Right ventricle myocardium inferior (tissue), 1 donor: ENCODE measurements at regions of chr14 and their contacts with region 1.

Region 1: GRCh38 chr14:105324080-105324778 is 9.7 kb downstream of the PACS2 start:
- DNase-seq: no peak
- ATAC-seq: peak; percentile 81

Region 2: DNA sequence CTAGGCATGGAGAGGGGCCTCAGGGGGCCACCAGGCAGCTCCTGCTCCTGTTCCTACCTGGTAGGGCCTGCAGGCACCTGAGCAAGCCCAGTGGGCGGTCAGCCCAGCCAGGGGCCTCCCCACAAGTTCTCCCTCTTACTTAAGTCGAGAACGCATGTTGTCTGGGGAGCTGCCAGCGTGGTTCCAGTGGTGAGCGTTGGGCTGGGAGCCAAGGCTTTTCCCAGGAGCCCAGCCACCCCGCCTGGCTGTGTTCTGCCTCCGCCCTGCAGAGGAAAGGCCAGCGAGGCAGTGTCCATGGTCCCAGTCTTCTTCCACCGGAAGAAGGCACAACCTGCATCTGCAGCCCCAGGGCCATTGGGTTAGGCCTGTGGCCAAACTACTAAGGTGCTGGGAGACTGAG is 743.3 kb before region 1 on chr14:
- intact Hi-C with region 1: no loop called
- DNase-seq: peak; percentile 84
- ATAC-seq: peak; percentile 30

Region 3: GRCh38 chr14:105005929-105006830 is 318.0 kb before region 1 on chr14:
- intact Hi-C with region 1: no loop called
- DNase-seq: peak; percentile 53
- ATAC-seq: no peak

Region 4: DNA sequence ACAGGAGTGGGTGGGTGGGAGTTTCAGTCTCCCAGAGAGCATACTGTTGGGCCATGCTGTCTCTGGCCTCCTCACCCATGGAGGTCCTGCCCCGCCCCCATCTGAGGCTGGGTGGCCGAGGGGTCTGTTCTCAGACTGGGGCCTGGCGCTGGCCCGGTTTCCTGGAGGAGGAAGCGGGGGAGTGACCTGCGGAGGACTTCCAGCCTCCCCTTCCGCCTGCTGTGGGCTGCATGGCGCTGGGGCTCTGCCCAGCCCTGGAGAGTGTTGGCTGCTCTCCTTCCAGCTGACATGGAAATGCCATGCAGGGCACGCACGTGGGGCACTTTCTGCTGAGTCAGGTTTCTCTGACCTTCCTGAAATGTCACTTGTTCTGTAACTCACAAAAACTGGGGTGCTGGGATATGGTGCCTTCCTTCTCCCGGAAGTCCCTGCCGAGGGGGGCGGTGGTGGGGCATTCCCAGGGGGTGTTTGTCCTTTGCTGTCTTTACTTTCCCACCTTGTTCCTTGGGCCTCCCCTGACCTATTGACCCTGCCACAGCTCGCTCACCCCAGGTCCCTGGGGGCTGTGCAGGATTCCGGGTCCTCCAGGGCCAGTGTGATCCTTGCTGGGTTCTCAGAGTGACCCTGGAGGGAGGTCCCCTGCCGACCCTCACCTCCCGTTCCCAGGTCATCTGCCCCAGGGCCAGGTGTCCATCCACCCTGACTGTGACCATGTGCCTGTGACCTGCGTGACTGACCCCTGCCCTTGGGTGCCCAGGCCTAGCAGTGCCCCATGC is 13.9 kb after region 1 on chr14:
- intact Hi-C with region 1: loop called (anchors 2 kb)
- DNase-seq: no peak
- ATAC-seq: peak; percentile 47